Ascending aorta (tissue), 2 donors: ENCODE measurements at regions of chr2 and their contacts with region 1.

Region 1: GRCh38 chr2:170973492-170974303 is 44.6 kb downstream of the GORASP2 start:
- DNase-seq: peak; percentile 18 to 90
- H3K4me3 ChIP-seq: peak overlapping the region; percentile 77 to 92
- H3K27ac ChIP-seq: peak overlapping the region; percentile 76 to 77
- H3K4me1 ChIP-seq: peaks cover 0 to 7% of the 10 kb centered on the region in 2 donors
- H3K27me3 ChIP-seq: no peaks in the 10 kb centered on the region
- CTCF ChIP-seq: peak; percentile 74 to 97 (median 80)

Region 2: DNA sequence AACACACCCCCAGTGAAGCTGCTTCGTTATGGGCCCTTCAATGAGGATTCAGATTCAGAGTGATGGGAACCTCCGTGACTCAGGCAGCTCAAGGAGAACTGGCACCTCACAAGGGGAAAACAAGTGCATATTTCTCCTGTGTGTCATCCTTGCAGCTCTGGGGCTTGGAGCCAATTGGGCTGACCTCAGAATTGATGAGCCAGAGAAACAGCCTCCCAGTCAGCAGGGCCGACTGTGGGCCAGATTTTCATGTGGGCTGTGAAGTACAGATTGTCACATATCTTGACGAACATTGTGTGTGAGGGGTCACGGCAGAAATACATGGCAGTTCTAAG is 448.2 kb before region 1 on chr2:
- intact Hi-C with region 1: loop called (anchors 5 kb)
- DNase-seq: peak; percentile 58 to 94
- H3K4me3 ChIP-seq: peak overlapping the region in 1 of 2 donors; percentile 8
- H3K27ac ChIP-seq: peak overlapping the region; percentile 16 to 62
- H3K4me1 ChIP-seq: peaks cover 3 to 25% of the 10 kb centered on the region in 2 donors
- H3K27me3 ChIP-seq: no peaks in the 10 kb centered on the region
- CTCF ChIP-seq: no peak

Region 3: DNA sequence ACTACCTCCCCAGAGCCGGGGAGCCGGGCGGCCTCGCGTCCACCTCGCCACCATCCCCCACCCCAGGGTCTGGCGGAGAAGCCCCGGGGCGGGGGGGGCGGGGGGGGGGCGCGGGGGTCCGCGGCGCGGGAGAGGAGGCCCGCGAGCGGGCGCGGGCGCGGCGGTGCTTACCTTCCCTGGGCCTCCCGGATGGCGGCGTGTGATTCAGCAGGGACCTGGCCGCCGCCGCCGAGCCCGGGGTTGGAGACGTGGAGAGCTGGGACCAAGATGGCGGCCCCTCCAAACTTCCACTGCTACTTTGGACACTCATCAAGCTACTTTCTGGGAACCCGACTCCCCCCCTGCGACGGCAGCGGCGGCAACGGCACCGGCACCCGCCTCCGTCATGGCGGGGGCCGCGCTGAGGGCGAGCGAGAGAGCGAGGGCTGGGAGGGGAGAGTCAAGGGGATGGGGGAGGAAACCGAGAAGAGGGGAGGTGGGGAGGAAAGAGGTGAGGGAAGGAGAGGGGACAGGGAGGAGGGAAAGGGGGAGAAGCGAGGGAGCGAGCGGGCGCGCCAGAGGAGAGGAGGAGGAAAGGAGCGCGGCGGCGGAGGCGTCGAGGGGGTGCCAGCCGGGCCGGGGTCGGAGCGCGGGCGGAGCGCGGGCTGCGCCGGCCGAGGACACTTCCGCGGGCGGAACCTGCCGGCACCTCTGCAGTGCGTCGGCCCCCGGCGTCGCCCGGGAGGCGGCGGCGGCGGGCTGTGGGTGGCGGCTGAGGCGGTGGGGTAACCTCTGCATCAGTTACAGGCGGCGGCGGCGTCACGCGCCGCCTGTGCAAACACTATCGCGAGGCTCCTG is 186.6 kb after region 1 on chr2 and contains the start of gene TLK1:
- intact Hi-C with region 1: loop called (anchors 1 kb)
- DNase-seq: peak; percentile 17 to 85
- H3K4me3 ChIP-seq: peak within 1 kb of the TSS; percentile 96 to 97
- H3K27ac ChIP-seq: peak within 1 kb of the TSS; percentile 98 to 99
- H3K4me1 ChIP-seq: peaks cover 0 to 7% of the 10 kb centered on the region in 2 donors
- H3K27me3 ChIP-seq: no peaks in the 10 kb centered on the region
- CTCF ChIP-seq: no peak
- total RNA-seq, gene TLK1: 32.2 TPM

Region 4: DNA sequence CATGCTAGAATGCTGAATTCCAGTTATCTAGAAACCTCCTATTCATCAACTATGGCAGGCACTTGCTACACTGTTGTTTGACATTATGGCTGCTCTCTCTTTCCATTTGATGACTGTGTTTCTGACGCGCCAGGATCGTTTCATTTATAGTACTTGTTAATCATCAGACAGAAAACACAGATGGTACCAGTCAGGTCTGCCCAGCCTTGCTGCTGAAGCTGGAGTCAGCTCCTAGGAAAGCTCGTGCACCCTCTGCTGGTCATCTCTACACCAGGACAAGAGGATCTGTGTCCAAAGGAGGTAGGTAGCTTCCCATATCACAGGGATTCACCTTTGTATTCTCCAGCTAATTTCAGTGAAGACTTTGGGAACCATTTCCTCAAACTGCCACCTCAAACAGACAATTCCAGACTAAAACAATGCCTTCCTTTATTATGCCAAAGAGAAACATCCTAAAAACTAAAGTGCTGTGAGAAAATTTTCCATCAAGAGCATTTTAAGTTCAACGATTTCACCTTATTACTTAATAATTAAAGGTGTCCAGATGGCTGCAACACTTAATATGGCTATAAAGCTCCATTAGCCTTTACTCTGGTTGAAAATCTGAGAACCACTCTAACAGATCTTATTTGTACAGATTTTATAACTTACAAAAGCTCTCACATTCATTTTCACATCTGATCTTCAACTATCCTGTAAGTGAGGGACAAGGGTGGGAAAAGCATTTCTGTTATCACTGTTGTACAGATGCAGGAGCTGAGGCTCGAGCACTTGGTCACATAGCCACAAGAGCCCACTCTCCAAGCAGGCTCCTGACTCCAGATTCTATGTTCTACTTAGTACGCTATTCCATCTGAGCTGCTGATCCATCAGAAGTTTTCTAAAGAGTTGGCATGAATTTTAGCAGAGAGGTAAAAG is 442.6 kb after region 1 on chr2:
- intact Hi-C with region 1: loop called (anchors 1 kb)
- DNase-seq: peak; percentile 49 to 93
- H3K4me3 ChIP-seq: no peak overlapping the region
- H3K27ac ChIP-seq: peak overlapping the region in 1 of 2 donors; percentile 67
- H3K4me1 ChIP-seq: no peaks in the 10 kb centered on the region
- H3K27me3 ChIP-seq: no peaks in the 10 kb centered on the region
- CTCF ChIP-seq: peak; percentile 75 to 84 (median 76)

Region 5: GRCh38 chr2:171522052-171522787 is 548.5 kb after region 1 on chr2 and contains the start of gene CYBRD1:
- intact Hi-C with region 1: loop called (anchors 5 kb)
- DNase-seq: peak; percentile 47 to 93
- H3K4me3 ChIP-seq: peak within 1 kb of the TSS; percentile 72 to 90
- H3K27ac ChIP-seq: peak within 1 kb of the TSS; percentile 94 to 97
- H3K4me1 ChIP-seq: peaks cover 0 to 23% of the 10 kb centered on the region in 2 donors
- H3K27me3 ChIP-seq: no peaks in the 10 kb centered on the region
- CTCF ChIP-seq: no peak
- total RNA-seq, gene CYBRD1: 222 TPM